ENCODE measurements at regions of chr21 and their contacts with region 1.

Region 1: GRCh38 chr21:34745557-34746255 is 76.9 kb downstream of the CLIC6 start:
- H3K4me3 ChIP-seq: no peak overlapping the region
- H3K27ac ChIP-seq: no peak overlapping the region
- H3K4me1 ChIP-seq: no peaks in the 10 kb centered on the region
- CTCF ChIP-seq: peak; percentile 69; the same call in 1 of the 2 replicates

Region 2: DNA sequence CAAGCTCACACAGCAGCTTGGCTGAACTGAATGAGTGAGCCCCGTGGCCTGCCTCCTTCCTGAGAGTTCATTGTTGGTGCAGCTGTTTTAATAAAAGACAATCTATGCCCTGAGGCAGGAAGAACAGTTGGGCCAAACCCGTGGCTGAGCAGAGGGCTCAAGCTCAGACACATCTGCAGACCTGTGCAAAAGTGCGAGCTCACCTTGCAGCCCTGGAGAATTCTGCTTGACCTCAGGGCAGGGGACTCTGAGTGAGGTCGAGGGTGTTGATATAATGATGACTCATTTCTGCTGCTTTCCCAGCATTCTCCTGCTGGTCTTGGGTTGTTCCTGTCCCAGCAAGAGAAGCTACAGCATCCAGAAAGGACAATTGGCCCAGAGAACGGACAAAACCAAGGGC is 891.1 kb before region 1 on chr21:
- CTCF ChIA-PET with region 1: no interaction called
- POLR2A ChIA-PET with region 1: no interaction called
- H3K4me3 ChIP-seq: no peak overlapping the region
- H3K27ac ChIP-seq: no peak overlapping the region
- H3K4me1 ChIP-seq: no peaks in the 10 kb centered on the region
- CTCF ChIP-seq: no peak

Region 3: GRCh38 chr21:34722684-34723300 is 22.9 kb before region 1 on chr21:
- CTCF ChIA-PET with region 1: interaction called, 36 read pairs
- POLR2A ChIA-PET with region 1: no interaction called
- H3K4me3 ChIP-seq: no peak overlapping the region
- H3K27ac ChIP-seq: no peak overlapping the region
- H3K4me1 ChIP-seq: no peaks in the 10 kb centered on the region
- CTCF ChIP-seq: peak; percentile 50; the same call in 1 of the 2 replicates

Region 4: DNA sequence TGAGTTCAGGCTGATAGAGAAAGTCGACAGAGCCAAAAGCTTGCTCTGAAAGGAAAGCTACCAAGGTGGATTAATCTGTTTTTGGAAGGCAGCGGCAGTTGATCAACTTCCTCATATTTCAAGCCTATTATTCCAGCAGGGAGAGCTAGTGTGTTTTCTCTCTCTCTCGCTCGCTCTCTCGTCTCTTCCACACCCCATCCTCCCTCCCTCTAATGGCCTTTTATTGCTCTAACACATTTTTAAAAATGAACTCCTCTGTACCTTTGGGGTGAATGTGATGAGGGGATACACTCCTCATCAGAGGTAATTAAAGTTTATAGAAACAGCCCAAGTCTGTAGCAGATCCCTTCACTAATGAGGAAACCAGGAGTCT is 49.5 kb after region 1 on chr21:
- CTCF ChIA-PET with region 1: interaction called, 16 read pairs
- POLR2A ChIA-PET with region 1: no interaction called
- H3K4me3 ChIP-seq: no peak overlapping the region
- H3K27ac ChIP-seq: peak overlapping the region; percentile 19; the same call in 1 of the 2 replicates
- H3K4me1 ChIP-seq: peaks cover 12% of the 10 kb centered on the region
- CTCF ChIP-seq: no peak

Region 5: DNA sequence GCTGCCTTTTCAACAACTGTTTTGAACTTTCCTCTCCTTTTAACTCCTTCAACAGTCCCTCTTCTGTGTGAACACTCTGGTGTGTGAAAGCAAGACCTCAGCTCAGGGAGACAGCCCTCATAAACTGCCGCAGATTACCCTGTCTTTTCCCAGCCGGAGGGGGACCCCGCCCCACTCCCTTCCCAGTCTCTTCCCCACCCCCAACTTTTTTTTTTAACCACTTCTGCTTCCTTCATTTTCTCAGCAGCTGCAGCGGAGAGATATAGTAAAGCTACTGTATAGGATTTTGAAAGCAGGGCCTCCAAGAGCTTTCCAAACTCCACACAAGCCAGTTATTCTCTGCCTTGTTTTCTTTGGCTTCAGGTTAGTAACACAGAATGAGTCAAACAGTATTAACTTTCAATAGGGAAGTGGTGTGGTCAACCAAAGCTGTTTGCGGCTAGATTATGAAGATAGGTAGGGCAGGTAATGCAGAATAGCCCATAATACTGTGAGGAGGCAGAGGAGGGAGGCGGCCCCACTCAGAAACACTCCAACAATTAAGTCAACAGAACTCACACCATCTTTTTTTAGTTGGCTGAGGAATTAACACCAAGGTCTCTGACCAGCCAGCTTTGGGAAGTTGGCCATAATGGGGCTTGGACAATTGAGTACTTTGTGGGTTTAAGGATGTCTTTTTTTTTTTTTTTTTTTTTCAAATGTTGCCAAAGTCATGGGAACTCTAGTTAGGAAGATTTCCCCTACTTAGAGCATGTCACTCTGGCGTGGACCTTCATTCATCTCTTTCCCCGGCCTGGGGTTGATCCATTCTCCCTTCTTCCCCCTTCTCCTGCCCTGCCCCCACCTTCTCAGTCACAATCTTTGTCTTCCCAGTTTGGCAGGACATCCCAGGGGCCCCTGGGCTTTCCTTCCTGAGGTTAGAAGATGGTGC is 100.1 kb after region 1 on chr21:
- CTCF ChIA-PET with region 1: interaction called, 10 read pairs
- POLR2A ChIA-PET with region 1: interaction called, 5 read pairs
- H3K4me3 ChIP-seq: no peak overlapping the region
- H3K27ac ChIP-seq: peak overlapping the region; percentile 96
- H3K4me1 ChIP-seq: peaks cover 39% of the 10 kb centered on the region
- CTCF ChIP-seq: no peak

Region 6: DNA sequence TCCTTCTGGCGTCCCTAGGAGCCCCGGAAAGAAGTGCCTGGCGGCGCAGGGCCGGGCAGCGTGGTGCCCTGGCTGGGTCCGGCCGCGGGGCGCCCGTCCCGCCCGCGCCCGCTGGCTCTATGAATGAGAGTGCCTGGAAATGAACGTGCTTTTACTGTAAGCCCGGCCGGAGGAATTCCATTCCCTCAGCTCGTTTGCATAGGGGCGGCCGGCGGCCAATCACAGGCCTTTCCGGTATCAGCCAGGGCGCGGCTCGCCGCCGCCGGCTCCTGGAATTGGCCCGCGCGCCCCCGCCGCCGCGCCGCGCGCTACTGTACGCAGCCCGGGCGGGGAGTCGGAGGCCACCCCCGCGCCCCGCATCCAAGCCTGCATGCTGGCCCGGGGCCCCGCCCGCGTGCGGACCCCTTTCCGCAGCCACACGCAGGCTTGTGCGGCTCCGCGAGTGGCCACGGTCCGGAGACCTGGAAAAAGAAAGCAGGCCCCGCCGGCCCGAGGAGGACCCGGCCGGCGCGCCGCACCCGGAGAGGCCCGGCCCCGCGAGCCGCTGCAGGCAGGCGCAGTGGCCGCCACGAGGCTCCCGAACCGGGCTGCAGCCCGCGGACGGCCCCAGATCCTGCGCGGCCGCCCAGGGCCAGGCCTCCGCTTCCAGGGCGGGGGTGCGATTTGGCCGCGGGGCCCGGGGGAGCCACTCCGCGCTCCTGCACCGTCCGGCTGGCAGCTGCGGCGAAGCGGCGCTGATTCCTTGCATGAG is 143.0 kb after region 1 on chr21:
- CTCF ChIA-PET with region 1: interaction called, 40 read pairs
- POLR2A ChIA-PET with region 1: interaction called, 45 read pairs
- H3K4me3 ChIP-seq: peak overlapping the region; percentile 94
- H3K27ac ChIP-seq: peak overlapping the region; percentile 95
- H3K4me1 ChIP-seq: peaks cover 8% of the 10 kb centered on the region; the same call in 1 of the 2 replicates
- CTCF ChIP-seq: 0 out of 2 replicates have a peak, but pooled peaks have one; percentile 31

Region 7: DNA sequence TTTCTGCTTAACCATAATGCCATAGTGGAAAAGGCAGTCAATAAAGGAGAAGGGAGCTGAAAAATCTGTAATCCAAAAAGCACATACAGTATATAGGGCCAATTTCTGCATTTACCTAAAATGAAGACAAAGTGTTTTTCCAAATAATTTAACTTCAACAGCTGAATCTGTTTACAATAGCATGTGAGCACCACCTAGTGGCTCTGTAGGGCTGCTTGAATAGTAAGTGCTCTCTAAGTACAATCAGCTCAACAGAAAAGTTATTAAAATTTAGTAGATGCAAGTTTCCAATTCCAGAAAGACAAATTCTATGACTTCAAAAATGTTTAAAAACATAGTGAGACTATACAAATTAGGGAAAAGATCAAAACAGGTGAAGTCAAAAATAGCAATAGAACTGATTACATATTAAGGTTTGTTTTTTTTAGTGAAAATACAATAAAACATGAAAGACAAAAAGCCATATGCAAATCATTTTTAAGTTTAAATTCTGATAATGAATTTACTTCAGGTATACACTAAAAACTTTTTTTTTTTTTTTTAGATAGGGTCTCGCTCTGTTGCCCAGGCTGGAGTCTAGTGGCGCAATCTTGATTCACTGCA is 1094.6 kb after region 1 on chr21:
- CTCF ChIA-PET with region 1: interaction called, 32 read pairs
- POLR2A ChIA-PET with region 1: interaction called, 4 read pairs
- H3K4me3 ChIP-seq: no peak overlapping the region
- H3K27ac ChIP-seq: no peak overlapping the region
- H3K4me1 ChIP-seq: no peaks in the 10 kb centered on the region
- CTCF ChIP-seq: peak; percentile 50